Heart right ventricle (tissue), 16 donors: ENCODE measurements at regions of chr16 and their contacts with region 1.

Region 1: GRCh38 chr16:66091471-66091891 is 275.0 kb upstream of the CDH5 start:
- DNase-seq: no peak
- ATAC-seq: no peak
- H3K4me3 ChIP-seq: no peak overlapping the region
- H3K27ac ChIP-seq: no peak overlapping the region
- H3K4me1 ChIP-seq: no peaks in the 10 kb centered on the region
- H3K27me3 ChIP-seq: no peaks in the 10 kb centered on the region
- CTCF ChIP-seq: no peak

Region 2: DNA sequence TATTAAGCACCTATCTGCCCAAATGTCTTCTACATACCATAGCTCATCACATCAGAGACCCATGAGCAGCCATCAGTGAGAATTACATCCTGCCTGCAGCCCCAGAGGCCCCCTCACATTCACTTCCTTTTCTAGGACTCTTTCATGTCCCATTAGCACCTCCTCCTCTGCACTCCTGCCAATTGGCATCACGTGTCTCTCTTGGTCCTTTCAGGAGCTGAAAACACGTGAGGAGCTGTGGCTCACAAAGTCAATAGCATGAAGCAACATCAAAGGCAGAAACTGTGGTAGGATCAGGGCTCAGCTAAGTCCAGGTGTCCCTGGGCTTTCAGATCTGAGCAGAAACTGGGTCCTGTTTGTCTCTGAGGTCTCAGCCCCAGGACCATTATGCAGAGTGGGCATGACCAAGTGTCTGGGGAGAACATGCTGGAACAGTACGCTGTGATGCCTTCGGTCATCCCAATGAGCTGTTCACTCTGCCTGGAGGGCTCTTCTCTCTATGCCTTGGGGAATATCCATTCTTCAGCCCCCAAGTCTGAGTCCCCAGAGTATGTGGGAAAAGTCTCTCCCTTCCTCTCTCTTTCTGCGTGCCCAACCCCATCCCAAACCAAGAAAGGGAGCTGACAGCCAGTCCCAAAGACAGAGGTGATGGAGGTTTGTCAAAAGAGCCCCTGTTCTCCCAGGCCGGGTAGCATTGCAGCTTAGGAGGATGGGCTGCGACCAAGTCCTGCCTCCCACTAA is 182.0 kb before region 1 on chr16:
- intact Hi-C with region 1: no loop called
- DNase-seq: no peak
- ATAC-seq: no peak
- H3K4me3 ChIP-seq: no peak overlapping the region
- H3K27ac ChIP-seq: no peak overlapping the region
- H3K4me1 ChIP-seq: no peaks in the 10 kb centered on the region
- H3K27me3 ChIP-seq: no peaks in the 10 kb centered on the region
- CTCF ChIP-seq: no peak

Region 3: DNA sequence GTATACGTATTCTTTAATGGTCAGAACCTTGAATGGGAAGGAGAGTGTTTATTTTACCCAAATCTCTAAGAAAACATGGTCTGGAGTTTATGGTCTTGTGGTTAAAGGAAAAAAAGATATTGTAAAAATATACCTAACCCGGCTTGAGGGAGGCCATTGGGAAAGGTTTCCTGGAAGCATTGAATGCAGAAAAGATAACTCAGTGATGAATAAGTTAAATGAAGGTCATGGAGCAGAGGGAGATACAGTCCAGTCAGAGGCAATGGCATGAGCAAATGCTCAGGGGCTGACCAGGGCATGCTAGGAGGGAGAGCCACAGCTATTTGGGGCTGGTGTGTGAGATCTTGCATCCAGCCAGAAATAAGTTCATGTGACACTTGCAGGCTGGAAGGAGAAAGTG is 155.4 kb before region 1 on chr16:
- intact Hi-C with region 1: loop called in 1 of 10 experiments (anchors 10 kb)
- DNase-seq: no peak
- ATAC-seq: no peak
- H3K4me3 ChIP-seq: no peak overlapping the region
- H3K27ac ChIP-seq: no peak overlapping the region
- H3K4me1 ChIP-seq: no peaks in the 10 kb centered on the region
- H3K27me3 ChIP-seq: peaks cover 0 to 3% (median 0%) of the 10 kb centered on the region in 7 donors
- CTCF ChIP-seq: no peak